ENCODE measurements at regions of chr11 and their contacts with region 1.

Region 1: GRCh38 chr11:9015677-9016076 is 11.9 kb upstream of the NRIP3 start:
- DNase-seq: peak; percentile 69 to 84 (median 80)
- H3K4me3 ChIP-seq: no peak overlapping the region
- H3K27ac ChIP-seq: no peak overlapping the region
- H3K4me1 ChIP-seq: peaks cover 0 to 18% (median 13%) of the 10 kb centered on the region in 4 experiments
- H3K27me3 ChIP-seq: no peaks in the 10 kb centered on the region

Region 2: DNA sequence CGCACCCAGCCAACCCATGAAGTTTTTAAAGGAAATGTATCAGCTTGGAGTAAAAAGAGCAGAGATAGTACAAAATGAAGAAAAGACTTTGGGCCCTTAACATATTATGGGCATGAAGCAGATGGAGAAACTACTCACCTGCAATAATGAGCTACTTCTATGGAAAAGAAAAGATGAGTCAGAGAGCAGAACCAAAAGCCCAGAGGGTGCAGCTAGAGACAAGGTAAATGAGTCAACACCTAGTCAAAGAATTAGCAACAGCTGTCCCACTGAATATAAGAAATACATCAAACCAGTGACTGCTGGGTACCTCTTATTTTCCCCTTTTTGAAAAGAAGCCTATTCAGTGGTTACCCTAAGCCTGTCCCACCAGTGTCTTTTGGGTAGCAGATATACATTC is 271.3 kb before region 1 on chr11:
- CTCF ChIA-PET with region 1: no interaction called
- POLR2A ChIA-PET with region 1: no interaction called
- DNase-seq: no peak
- H3K4me3 ChIP-seq: no peak overlapping the region
- H3K27ac ChIP-seq: no peak overlapping the region
- H3K4me1 ChIP-seq: no peaks in the 10 kb centered on the region
- H3K27me3 ChIP-seq: peaks cover 0 to 2% (median 0%) of the 10 kb centered on the region in 5 experiments

Region 3: GRCh38 chr11:9005087-9005486 is 10.6 kb before region 1 on chr11:
- CTCF ChIA-PET with region 1: interaction called, 13 read pairs
- POLR2A ChIA-PET with region 1: no interaction called
- DNase-seq: no peak
- H3K4me3 ChIP-seq: no peak overlapping the region
- H3K27ac ChIP-seq: no peak overlapping the region
- H3K4me1 ChIP-seq: peaks cover 5 to 34% (median 29%) of the 10 kb centered on the region in 4 experiments
- H3K27me3 ChIP-seq: peaks cover 2 to 54% (median 20%) of the 10 kb centered on the region in 5 experiments

Region 4: DNA sequence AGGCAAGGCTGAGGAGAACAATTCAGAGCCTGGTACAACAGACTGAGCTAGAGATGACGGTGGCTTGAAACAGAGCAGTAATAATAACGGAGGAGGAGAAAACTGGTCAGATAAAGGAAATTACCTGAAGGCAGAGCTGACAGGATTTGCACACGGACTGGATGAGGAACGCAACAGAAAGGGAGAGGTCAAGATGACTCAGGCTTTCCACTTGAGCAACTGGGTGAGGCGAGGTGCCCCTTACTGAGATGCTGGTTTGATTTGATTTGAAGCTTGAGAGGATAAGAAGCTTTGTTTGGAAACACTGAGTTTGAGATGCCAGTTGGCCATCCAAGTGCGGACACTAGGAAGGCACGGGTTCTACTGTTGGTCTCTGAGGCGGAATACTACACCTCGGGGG is 23.5 kb after region 1 on chr11:
- CTCF ChIA-PET with region 1: interaction called, 17 read pairs
- POLR2A ChIA-PET with region 1: no interaction called
- DNase-seq: no peak
- H3K4me3 ChIP-seq: no peak overlapping the region
- H3K27ac ChIP-seq: no peak overlapping the region
- H3K4me1 ChIP-seq: no peaks in the 10 kb centered on the region
- H3K27me3 ChIP-seq: peaks cover 0 to 3% (median 0%) of the 10 kb centered on the region in 5 experiments

Region 5: DNA sequence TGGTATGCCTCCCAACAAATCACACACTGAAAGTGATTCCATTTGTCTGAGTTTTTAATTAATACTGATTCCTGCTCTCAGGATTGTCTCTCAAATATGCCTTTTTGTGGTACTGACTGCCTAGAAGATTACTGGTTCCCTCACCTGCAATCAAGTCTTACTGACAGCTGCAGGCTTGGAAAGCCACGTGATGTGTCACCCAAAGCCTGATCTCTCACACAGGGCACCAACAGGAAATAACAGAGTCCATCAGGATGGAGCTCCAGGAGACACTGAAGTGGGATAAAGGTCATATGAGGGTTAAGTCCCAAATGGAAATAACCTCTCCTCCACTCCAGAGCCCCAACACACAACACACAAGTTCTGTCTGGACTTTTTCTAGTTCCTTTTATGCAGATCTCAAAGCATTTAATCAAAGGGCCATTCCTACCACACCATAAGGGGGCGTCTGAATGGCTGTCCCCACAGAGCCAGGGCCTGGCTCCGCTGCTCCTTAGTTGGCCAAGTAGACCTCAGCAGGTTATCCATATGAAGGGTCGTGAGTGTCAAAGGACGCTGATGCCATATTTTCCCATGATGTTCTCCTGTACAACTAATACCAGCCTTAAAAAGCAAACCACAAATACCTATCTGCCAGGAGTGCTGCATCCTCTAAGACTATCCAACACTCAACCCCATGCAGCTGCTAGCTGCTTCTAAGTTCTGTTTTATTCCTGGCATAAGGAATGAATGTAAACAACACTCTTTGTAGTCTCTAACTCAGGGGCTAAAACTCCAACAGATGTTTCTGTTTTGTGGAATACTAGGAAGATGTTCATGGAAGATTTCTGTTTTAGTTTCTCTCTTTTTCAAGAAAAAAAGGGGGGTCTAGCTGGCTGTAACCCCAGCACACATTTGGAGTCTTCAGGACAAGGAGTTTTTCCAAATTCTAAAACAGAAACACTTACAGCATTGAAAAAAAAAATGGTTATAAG is 62.7 kb after region 1 on chr11:
- CTCF ChIA-PET with region 1: no interaction called
- POLR2A ChIA-PET with region 1: no interaction called
- DNase-seq: no peak
- H3K4me3 ChIP-seq: no peak overlapping the region
- H3K27ac ChIP-seq: no peak overlapping the region
- H3K4me1 ChIP-seq: no peaks in the 10 kb centered on the region
- H3K27me3 ChIP-seq: no peaks in the 10 kb centered on the region

Region 6: DNA sequence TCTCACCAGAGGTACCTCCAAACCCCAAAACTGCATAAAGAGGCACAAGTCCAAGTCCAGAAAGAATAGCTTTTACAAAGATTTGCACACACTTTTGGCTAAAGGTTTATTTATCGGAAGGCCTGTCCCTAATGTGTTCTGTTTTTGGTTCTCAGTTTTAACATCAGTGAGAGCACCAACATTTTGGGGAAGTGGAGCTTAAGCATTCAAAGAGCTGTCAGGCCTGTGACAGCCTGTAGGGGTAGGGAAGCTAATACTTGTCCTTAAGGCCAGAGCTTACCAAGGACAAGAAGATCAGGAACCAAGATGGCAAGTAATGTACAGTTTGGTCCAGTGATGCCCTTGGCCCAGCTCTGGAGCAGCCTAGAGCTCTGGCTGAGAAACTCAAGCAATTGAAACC is 114.6 kb after region 1 on chr11:
- CTCF ChIA-PET with region 1: interaction called, 18 read pairs
- POLR2A ChIA-PET with region 1: no interaction called
- DNase-seq: peak; percentile 26 to 62 (median 62)
- H3K4me3 ChIP-seq: no peak overlapping the region
- H3K27ac ChIP-seq: no peak overlapping the region
- H3K4me1 ChIP-seq: peaks cover 3 to 32% (median 21%) of the 10 kb centered on the region in 4 experiments
- H3K27me3 ChIP-seq: no peaks in the 10 kb centered on the region

Region 7: DNA sequence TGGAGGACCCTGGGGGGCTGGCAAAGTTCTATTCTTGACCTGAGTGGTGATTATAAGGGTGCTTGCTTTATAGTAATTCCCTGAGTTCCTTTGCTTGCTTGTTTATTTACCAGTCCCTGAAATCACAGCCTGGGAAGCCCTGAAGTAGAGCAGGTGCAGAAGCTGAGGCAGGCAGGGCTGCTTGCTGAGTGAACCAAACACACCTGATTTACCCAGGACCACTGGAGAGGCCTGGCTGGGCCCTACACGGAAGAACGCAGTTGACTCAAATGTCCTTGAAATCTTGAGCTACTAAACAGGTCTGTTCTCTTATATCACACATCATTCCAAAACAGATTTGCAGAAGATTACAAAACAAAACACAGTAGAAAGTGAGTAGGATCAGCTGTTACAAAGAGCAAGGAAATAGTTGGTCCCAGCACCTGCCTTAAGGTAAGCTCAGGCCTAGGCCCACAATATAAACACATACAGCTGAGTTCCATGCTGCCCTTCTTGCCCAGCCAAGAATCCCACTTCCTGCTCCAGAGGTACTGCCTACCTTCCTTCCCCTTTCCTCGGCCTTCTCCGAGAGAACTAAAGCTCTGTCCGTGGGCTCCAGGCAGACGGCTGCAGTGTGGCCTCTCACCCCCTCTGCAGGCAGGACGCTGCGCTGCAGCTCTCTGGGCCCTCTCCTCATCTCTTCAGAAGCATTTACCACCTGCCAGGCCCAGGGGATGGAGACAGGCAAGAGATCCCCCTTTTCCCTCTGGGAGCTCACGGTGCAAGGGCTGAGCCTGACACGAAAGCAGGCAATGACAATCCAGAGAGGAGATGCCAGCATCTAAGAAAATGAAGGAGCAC is 121.8 kb after region 1 on chr11:
- CTCF ChIA-PET with region 1: interaction called, 131 read pairs
- POLR2A ChIA-PET with region 1: no interaction called
- DNase-seq: peak; percentile 55 to 72 (median 67)
- H3K4me3 ChIP-seq: peak overlapping the region in 1 of 7 experiments; percentile 11
- H3K27ac ChIP-seq: no peak overlapping the region
- H3K4me1 ChIP-seq: peaks cover 0 to 27% (median 15%) of the 10 kb centered on the region in 4 experiments
- H3K27me3 ChIP-seq: no peaks in the 10 kb centered on the region

Region 8: GRCh38 chr11:9506489-9507276 is 491.0 kb after region 1 on chr11:
- CTCF ChIA-PET with region 1: interaction called, 15 read pairs
- POLR2A ChIA-PET with region 1: no interaction called
- DNase-seq: peak; percentile 72 to 88 (median 84)
- H3K4me3 ChIP-seq: no peak overlapping the region
- H3K27ac ChIP-seq: no peak overlapping the region
- H3K4me1 ChIP-seq: no peaks in the 10 kb centered on the region
- H3K27me3 ChIP-seq: no peaks in the 10 kb centered on the region